ENCODE measurements at regions of chr17 and their contacts with region 1.

Region 1: DNA sequence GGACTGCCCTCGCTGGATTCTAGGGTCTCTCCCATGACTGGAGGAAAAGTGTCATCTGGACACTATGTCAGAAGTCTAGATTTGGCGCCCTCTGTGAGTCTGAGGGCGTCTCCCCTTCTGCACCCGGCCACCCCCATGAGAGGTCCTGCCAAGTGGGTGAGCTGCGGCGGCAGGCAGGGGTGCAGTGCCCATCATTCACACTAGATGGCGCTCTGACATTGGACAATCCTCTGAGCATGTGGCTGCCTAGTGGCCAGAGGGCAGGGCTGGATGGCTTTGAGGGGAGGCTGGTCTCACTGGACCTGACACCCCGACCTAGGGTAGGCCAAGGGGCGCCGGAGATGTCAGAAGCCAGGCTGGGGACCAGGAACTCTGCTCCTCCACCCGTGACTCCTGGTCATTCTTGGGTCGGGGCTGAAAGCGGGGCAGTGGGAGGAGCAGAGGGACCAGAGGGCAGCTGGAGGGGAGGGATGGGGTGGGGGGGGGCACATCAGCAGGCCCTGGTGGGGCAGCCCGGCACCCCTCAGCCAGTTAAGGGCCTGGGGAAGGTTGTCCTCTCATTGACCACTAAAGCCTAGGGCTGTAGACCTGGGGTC is 28.0 kb downstream of the MRM1 start:
- DNase-seq: no peak
- H3K4me3 ChIP-seq: no peak overlapping the region
- CTCF ChIP-seq: peak; percentile 95

Region 2: DNA sequence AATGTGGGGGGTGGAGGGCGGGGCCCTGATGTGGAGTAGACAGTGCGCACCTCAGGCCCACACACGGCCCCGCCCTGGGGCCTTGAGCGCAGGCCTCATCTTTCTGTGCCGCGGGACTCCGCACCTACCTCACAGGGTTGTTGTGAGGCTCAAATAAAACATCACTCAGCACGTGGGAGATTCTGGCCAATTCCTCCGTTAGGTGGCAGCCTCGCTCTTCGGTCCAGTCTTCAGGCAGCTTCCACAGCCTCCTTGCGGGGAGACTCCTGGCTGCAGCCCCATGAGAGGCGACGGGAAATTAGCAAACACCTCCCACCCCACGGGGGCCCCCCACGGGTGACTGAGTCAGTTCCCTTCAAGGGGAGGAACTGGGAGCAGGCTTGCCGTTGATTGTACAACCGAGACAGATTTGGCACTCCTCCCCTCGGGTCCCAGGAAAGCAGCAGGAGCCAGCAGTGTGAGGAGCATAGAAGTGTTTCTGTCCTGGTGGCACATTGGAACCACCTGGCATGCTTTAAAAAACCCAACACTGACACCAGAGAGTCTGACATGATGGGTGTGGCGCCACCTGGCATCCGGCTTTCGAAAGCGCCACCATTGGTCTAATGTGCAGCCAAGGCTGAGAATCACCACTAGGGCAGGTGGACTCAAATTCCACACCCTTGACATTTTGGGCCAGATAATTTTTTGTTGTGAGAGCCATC is 20.4 kb before region 1 on chr17:
- CTCF ChIA-PET with region 1: interaction called, 93 read pairs
- POLR2A ChIA-PET with region 1: no interaction called
- DNase-seq: no peak
- H3K4me3 ChIP-seq: no peak overlapping the region
- CTCF ChIP-seq: peak; percentile 76

Region 3: DNA sequence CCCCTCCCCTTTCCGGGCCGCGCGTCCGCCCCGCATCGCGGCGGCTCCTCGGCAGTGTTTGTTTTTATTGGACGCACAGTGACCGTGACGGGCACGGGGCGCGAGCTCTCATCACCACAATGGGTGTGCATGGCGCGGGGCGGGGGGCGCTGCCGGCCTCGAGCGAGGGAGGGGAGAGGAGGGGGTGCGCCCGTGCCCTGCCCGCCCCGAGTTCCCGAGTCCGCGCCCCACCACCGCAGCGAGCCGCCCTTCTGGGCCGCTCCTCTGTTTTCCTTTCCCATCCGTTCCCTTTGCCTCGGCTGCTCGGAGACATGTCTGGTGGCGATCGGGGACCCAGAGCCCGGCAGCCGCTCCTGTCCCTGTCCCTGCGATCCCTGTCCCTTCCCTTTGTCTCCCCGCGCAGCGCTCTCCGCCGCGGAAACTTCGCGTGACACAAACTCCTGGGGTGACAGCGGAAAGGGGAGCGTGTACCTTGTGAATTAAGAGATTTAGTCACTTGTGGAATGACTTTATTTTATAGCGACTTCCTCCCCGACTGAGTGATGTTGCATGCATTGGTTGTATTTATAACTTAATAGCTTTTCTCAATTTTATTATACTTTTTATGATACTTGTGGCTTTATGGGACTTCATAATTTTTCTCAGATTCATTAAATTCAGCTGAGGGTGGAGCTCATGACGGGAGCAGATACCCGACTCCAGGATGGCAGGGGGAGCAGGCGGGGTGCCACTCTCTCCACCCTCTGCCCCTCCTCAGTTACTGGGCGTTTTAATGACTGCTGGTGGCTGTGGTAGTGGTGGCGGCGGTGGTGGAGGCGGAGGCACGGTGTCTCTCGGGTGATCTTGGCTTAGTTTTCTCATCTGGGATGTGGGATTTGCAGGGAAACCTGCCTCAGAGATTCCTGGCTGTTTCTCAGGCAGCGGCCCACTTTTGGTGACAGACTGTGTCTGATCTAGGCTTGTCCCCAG is 12.8 kb after region 1 on chr17:
- CTCF ChIA-PET with region 1: interaction called, 11 read pairs
- POLR2A ChIA-PET with region 1: no interaction called
- DNase-seq: no peak
- H3K4me3 ChIP-seq: peak overlapping the region; percentile 27
- CTCF ChIP-seq: no peak

Region 4: GRCh38 chr17:37212179-37212578 is 582.8 kb after region 1 on chr17:
- CTCF ChIA-PET with region 1: interaction called, 55 read pairs
- POLR2A ChIA-PET with region 1: no interaction called
- DNase-seq: no peak
- H3K4me3 ChIP-seq: no peak overlapping the region
- CTCF ChIP-seq: no peak

Region 5: DNA sequence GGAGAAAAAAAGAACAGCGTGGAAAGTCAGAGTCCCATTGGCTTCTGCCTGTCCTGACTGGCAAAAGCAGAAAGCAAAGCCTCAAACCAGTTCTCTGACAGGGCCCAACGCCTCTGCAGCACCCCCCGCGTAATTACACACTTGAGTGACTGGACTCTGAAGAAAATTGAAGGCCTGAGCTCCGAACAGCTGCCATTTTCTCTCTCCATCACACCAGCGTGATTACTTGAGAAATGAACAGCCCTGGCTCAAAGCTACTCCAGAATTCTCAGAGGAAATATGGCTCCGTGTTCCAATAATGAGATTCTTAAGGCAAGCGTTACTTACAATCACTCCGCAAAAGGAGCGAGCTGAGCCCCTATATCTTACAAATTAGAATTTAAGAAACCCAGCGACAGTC is 603.7 kb after region 1 on chr17:
- CTCF ChIA-PET with region 1: interaction called, 75 read pairs
- POLR2A ChIA-PET with region 1: no interaction called
- DNase-seq: no peak
- H3K4me3 ChIP-seq: no peak overlapping the region
- CTCF ChIP-seq: no peak

Region 6: DNA sequence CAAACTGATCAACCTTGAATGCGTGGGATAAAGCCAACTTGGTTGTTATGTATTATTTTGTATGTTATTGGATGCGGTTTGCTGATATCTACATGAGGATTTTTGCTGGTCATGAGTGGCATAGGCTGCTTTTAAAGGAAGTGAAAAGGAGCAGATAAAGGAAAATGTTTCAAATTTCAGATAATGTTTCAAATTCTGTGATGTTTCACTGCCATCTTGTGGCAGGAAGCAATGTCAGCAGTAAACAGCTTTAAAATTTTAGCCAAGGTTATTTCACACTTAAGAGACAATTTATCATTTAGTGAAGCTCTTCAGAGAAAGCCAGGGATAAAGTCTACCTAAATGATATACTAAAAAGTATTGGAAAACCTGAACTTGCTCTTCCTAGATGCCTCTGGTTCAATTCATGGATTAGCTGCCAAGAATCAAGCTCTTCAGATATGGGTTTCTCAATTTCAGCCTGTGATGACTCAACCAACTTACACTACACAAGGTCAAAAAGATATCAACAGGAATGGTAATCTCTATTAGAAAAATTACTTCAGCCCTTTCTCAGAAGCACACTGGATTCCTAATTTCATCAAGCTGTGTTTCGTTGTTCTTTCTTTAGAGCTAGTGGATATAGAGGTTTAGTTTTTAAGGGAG is 610.5 kb after region 1 on chr17:
- CTCF ChIA-PET with region 1: interaction called, 75 read pairs
- POLR2A ChIA-PET with region 1: no interaction called
- DNase-seq: no peak
- H3K4me3 ChIP-seq: no peak overlapping the region
- CTCF ChIP-seq: peak; percentile 58